GM13977 (cell line): ENCODE measurements at regions of chr10 and their contacts with region 1.

Region 1: GRCh38 chr10:89793649-89794254 is 92.4 kb downstream of the KIF20B start:
- DNase-seq: peak; percentile 60
- CTCF ChIP-seq: peak; percentile 68

Region 2: DNA sequence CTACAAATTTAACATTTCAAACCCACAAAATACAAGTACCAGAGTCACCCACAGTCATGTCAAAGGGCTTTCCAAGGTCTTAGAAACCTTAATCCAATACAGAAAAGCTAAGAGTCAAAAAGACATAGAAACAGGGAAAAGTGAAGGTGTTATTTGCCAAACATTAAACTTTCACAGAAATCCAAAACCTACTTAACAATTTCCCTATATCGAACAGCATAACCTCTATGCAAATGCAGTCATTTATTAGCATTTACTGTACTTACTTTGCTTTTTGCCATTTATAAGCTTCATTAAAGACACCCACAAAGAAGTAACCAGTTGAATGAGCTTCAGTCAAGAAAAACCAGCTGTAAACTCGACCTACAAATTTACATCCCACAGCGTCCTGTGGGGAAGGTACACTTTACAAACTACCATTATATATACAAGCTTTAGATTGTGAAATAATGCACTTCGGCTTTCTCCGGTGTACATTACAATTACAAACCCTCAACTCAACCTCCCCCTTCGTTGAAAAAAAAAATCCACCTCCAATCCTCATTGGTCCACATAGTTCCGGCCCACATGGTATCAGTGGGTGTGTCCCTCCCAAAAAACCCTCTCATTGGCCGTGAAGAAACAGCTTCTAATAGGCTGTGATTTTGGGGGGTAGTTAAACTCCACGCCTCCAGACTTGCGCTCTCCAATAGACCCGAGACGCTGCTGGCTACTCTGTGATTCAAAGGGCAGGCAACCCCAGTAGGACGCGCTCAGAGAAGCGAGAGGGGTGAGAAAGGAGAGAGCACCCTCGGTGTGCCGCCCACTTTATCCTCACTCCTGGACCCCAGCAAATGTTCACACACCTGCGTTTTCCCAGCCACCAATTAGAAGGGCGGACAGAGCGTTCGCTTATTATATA is 150.1 kb before region 1 on chr10:
- in situ Hi-C with region 1: no loop called
- DNase-seq: peak; percentile 94
- CTCF ChIP-seq: no peak

Region 3: DNA sequence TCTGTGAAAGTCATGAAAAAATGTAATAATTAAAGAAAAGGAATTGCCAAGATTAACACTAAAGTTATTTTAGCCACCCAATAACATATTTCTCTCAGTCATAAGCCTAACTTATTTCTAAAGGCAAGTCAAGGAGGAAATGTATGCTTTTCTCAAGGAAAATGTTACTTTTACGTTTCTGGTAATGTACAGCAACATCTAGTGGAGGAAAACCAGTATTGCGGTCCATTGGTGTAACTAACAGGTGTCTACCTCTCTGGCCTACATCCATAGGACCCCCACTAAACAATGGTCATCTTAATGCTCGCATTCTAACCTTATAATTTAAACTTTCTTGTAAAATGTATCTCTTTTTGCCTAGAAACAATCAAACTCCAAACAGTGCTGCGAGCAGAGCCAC is 345.1 kb after region 1 on chr10:
- in situ Hi-C with region 1: loop called (anchors 10 kb)
- DNase-seq: no peak
- CTCF ChIP-seq: peak; percentile 49

Region 4: GRCh38 chr10:90197766-90198165 is 404.0 kb after region 1 on chr10:
- in situ Hi-C with region 1: no loop called
- DNase-seq: no peak
- CTCF ChIP-seq: no peak

Region 5: GRCh38 chr10:90592638-90593302 is 799.0 kb after region 1 on chr10:
- in situ Hi-C with region 1: loop called (anchors 25 kb)
- DNase-seq: peak; percentile 6
- CTCF ChIP-seq: peak; percentile 40

Region 6: GRCh38 chr10:90871766-90872647 is 1078.3 kb after region 1 on chr10 and contains the start of gene RPP30:
- in situ Hi-C with region 1: loop called (anchors 25 kb)
- DNase-seq: peak; percentile 82
- CTCF ChIP-seq: no peak